ENCODE measurements at regions of chr2 and their contacts with region 1.

Region 1: GRCh38 chr2:12456293-12457151 is 260.2 kb upstream of the TRIB2 start:
- DNase-seq: peak; percentile 96
- H3K4me3 ChIP-seq: peak overlapping the region in 2 of 3 experiments; percentile 28 to 35
- H3K27ac ChIP-seq: peak overlapping the region; percentile 67
- H3K4me1 ChIP-seq: peaks cover 8% of the 10 kb centered on the region
- H3K27me3 ChIP-seq: no peaks in the 10 kb centered on the region
- CTCF ChIP-seq: no peak

Region 2: GRCh38 chr2:12081481-12082210 is 374.9 kb before region 1 on chr2:
- CTCF ChIA-PET with region 1: no interaction called
- dilution Hi-C with region 1: no loop called
- in situ Hi-C with region 1: no loop called
- intact Hi-C with region 1: no loop called
- DNase-seq: no peak
- H3K4me3 ChIP-seq: no peak overlapping the region
- H3K27ac ChIP-seq: no peak overlapping the region
- H3K4me1 ChIP-seq: no peaks in the 10 kb centered on the region
- H3K27me3 ChIP-seq: peaks cover 2% of the 10 kb centered on the region
- CTCF ChIP-seq: no peak

Region 3: GRCh38 chr2:12352889-12353288 is 103.6 kb before region 1 on chr2:
- CTCF ChIA-PET with region 1: no interaction called
- dilution Hi-C with region 1: no loop called
- in situ Hi-C with region 1: no loop called
- intact Hi-C with region 1: no loop called
- DNase-seq: no peak
- H3K4me3 ChIP-seq: no peak overlapping the region
- H3K27ac ChIP-seq: no peak overlapping the region
- H3K4me1 ChIP-seq: peaks cover 7% of the 10 kb centered on the region
- H3K27me3 ChIP-seq: no peaks in the 10 kb centered on the region
- CTCF ChIP-seq: no peak

Region 4: DNA sequence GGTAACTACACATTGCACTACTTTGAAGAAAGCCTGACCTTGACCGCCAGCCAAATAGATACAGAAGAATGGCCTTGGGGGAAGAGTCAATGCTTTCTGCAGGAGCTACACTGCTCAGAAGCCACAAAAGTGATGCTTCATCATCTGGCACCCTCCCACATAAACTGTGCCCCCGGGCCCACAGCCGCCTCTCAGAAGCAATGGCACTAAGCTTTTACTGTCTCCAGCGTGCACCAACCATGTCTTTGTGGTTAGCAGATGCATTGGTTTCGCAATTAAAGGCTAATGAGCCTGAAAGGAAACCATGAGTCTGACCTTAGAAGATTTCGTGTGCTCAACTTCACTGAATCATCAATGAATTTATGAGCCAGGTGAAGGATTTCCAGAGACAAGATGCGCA is 50.8 kb after region 1 on chr2:
- CTCF ChIA-PET with region 1: no interaction called
- dilution Hi-C with region 1: no loop called
- in situ Hi-C with region 1: no loop called
- intact Hi-C with region 1: loop called (anchors 1 kb)
- DNase-seq: peak; percentile 99
- H3K4me3 ChIP-seq: no peak overlapping the region
- H3K27ac ChIP-seq: no peak overlapping the region
- H3K4me1 ChIP-seq: peaks cover 34% of the 10 kb centered on the region
- H3K27me3 ChIP-seq: no peaks in the 10 kb centered on the region
- CTCF ChIP-seq: no peak